ENCODE measurements at regions of chr15 and their contacts with region 1.

Region 1: GRCh38 chr15:31215490-31216214 is 111.0 kb upstream of the KLF13 start:
- DNase-seq: peak; percentile 87
- H3K4me3 ChIP-seq: peak overlapping the region; percentile 70
- H3K27ac ChIP-seq: peak overlapping the region; percentile 82
- H3K4me1 ChIP-seq: peaks cover 49% of the 10 kb centered on the region
- CTCF ChIP-seq: peak; percentile 83

Region 2: GRCh38 chr15:31069360-31070000 is 146.2 kb before region 1 on chr15:
- CTCF ChIA-PET with region 1: no interaction called
- POLR2A ChIA-PET with region 1: no interaction called
- intact Hi-C with region 1: no loop called
- DNase-seq: no peak
- H3K4me3 ChIP-seq: no peak overlapping the region
- H3K27ac ChIP-seq: no peak overlapping the region
- H3K4me1 ChIP-seq: no peaks in the 10 kb centered on the region
- CTCF ChIP-seq: no peak

Region 3: GRCh38 chr15:31228985-31229826 is 13.6 kb after region 1 on chr15:
- CTCF ChIA-PET with region 1: no interaction called
- POLR2A ChIA-PET with region 1: interaction called, 9 read pairs
- intact Hi-C with region 1: loop called (anchors 2 kb)
- DNase-seq: peak; percentile 91
- H3K4me3 ChIP-seq: peak overlapping the region; percentile 77
- H3K27ac ChIP-seq: peak overlapping the region; percentile 99
- H3K4me1 ChIP-seq: peaks cover 94% of the 10 kb centered on the region
- CTCF ChIP-seq: no peak

Region 4: GRCh38 chr15:31306426-31307269 is 91.0 kb after region 1 on chr15:
- CTCF ChIA-PET with region 1: interaction called, 3 read pairs
- POLR2A ChIA-PET with region 1: interaction called, 3 read pairs
- intact Hi-C with region 1: loop called (anchors 1 kb)
- DNase-seq: peak; percentile 87
- H3K4me3 ChIP-seq: peak overlapping the region; percentile 56
- H3K27ac ChIP-seq: peak overlapping the region; percentile 87
- H3K4me1 ChIP-seq: peaks cover 90% of the 10 kb centered on the region
- CTCF ChIP-seq: no peak

Region 5: DNA sequence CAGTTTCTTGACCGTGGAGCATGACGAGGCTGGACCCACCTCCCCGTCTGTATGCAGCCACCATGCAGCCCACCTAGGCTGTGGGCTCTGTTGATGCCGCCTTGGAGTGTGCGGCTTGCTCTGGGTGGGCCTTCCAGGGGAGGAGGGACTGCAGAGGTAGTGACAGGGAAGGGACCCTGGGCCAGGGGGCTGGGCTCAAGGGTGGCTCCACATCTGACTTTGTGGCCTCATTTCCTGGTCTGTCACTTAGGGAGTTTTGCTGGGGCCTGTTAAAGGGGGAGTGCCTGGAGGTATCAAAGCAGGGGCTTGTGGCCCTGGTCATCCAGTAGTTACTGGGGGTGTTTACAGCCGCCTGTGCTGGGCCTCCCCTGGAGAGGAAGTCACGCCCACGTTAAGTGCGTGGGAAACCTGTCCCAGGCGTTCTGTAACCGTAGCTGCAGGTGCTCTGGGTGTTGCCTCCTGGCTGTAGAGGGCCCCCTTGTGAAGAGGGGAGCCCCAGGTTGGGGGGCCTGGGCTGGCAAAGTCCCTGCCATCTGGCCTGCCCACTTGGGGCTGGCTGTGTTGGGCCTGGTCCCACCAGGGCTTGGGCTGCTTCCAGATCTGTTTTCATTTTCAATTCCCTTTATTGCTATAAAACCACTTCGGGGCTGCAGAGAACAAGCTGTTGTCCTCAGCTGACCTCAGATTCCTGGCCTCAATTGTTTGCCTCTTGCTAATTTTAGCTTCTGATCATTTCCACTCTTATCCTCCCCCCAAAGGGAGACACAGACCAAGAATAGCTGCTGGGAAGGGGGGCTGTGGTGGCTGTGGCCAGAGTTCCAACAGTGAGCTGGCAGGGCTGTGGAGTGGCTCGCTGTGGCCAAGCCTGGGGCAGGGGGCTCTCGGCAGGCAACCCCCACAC is 137.5 kb after region 1 on chr15:
- CTCF ChIA-PET with region 1: no interaction called
- POLR2A ChIA-PET with region 1: no interaction called
- intact Hi-C with region 1: loop called (anchors 2 kb)
- DNase-seq: peak; percentile 71
- H3K4me3 ChIP-seq: peak overlapping the region; percentile 49
- H3K27ac ChIP-seq: peak overlapping the region; percentile 78
- H3K4me1 ChIP-seq: peaks cover 97% of the 10 kb centered on the region
- CTCF ChIP-seq: peak; percentile 58